ENCODE measurements at regions of chr15 and their contacts with region 1.

Region 1: DNA sequence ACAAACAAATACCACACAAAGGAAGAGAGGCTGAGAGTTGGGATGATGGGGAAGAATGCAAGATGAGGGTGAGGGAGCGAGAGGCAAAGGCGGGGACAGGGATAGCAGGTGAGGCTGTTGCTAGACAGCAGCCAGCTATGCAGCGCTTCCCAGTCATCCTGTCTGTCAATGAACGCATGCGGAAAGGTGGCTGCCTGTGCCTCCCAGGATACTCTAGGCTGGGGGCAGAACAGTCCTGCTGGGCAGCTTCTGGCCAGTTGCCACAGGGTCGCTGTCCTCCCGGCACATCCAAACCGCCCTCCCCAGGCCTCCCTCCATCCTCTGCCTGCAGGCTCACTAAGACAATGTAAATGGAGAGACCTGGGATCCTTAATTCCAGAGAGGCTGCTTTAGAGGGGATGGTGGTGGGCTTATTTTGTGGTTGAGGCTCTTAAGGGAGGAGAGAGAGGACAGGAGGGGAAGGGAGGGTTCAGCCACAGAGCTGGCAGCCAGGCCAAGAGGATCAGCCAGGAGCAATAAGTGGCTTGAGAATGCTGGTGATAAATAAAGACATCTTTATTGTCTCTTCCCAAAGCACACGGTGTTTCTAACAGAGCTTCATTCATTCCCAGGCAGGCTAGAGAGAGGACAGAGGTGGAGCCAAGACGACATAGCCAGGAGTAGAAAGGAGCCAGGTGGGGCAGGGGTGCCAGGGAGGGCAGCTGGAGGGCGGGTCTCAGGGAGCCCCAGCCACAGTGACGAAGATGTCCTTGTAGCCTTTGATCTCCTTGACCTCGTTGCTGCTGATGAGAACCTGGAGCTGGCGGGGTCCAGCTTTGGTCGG is 9.2 kb upstream of the TGM5 start:
- DNase-seq: no peak

Region 2: GRCh38 chr15:43230640-43231115 is 45.3 kb before region 1 on chr15:
- intact Hi-C with region 1: loop called in 1 of 2 experiments (anchors 5 kb)
- DNase-seq: no peak

Region 3: GRCh38 chr15:43241100-43241499 is 34.9 kb before region 1 on chr15:
- intact Hi-C with region 1: loop called in 1 of 2 experiments (anchors 1 kb)
- DNase-seq: peak; percentile 87